ENCODE measurements at regions of chr3 and their contacts with region 1.

Region 1: GRCh38 chr3:78545827-78546226 is 1222.0 kb downstream of the ROBO1 start:
- DNase-seq: no peak
- ATAC-seq: no peak
- H3K4me3 ChIP-seq: no peak overlapping the region
- H3K27ac ChIP-seq: no peak overlapping the region
- H3K4me1 ChIP-seq: peaks cover 0 to 3% (median 0%) of the 10 kb centered on the region in 9 donors
- H3K27me3 ChIP-seq: no peaks in the 10 kb centered on the region
- CTCF ChIP-seq: no peak

Region 2: DNA sequence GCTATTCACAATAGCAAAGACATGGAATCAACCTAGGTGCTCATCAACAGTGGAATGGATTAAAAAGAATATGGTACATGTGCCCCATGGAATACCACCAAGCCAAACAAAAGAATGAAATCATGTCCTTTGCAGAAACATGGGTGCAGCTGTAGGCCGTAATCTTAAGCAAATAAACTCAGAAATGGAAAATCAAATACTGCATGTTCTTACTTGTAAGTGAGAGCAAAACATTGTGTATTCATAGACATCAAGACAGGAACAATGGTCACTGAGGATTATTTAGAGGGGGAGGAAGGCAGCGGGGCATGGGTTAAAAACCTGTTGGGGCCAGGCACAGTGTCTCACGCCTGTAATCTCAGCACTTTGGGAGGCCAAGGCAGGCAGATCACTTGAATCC is 1810.7 kb before region 1 on chr3:
- intact Hi-C with region 1: no loop called
- DNase-seq: no peak
- ATAC-seq: no peak
- H3K4me3 ChIP-seq: no peak overlapping the region
- H3K27ac ChIP-seq: no peak overlapping the region
- H3K4me1 ChIP-seq: no peaks in the 10 kb centered on the region
- H3K27me3 ChIP-seq: no peaks in the 10 kb centered on the region
- CTCF ChIP-seq: no peak

Region 3: GRCh38 chr3:77449459-77450350 is 1096.1 kb before region 1 on chr3:
- intact Hi-C with region 1: loop called in 1 of 10 experiments (anchors 5 kb)
- DNase-seq: no peak
- ATAC-seq: no peak
- H3K4me3 ChIP-seq: no peak overlapping the region
- H3K27ac ChIP-seq: no peak overlapping the region
- H3K4me1 ChIP-seq: no peaks in the 10 kb centered on the region
- H3K27me3 ChIP-seq: no peaks in the 10 kb centered on the region
- CTCF ChIP-seq: no peak

Region 4: DNA sequence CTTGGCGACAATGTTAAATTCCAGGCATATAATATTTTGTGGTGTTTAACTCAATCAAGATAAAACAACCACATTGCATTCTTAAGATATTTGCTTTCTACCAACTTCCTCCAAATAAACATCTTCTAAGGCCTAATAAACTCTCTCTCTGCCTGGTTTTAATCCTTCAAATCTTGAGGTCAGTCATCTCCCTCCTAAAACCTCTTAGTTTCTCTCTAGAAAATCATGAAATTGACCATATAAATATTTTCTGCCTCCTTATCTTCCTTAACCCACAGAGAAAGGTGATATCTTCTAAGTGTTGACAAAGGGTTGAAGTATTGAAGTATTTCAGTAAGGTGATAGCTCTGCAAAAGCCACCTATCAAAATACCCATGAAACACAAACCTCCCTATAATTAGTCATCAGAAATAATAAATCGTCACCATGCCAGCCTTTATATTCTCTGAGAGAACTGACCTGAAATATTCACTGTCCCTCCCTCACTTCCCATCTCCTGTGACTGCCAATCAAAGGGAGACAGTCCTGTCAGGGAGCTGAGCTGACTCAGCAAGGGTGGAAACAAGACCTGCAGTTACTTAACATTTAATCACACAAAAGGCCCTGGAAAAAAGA is 39.1 kb before region 1 on chr3:
- intact Hi-C with region 1: no loop called
- DNase-seq: no peak
- ATAC-seq: no peak
- H3K4me3 ChIP-seq: no peak overlapping the region
- H3K27ac ChIP-seq: no peak overlapping the region
- H3K4me1 ChIP-seq: no peaks in the 10 kb centered on the region
- H3K27me3 ChIP-seq: no peaks in the 10 kb centered on the region
- CTCF ChIP-seq: no peak

Measured in heart right ventricle (tissue), 16 donors.